ENCODE measurements at regions of chr12 and their contacts with region 1.

Region 1: GRCh38 chr12:54032627-54033100 is at the start of gene HOXC5:
- DNase-seq: peak; percentile 42 to 77 (median 61)
- H3K4me3 ChIP-seq: no peak within 1 kb of the TSS
- H3K4me3 Mint-ChIP-seq: peak within 1 kb of the TSS; percentile 69 to 84 (median 78)
- H3K27ac ChIP-seq: no peak within 1 kb of the TSS
- H3K27ac Mint-ChIP-seq: peak within 1 kb of the TSS in 3 of 8 donors; percentile 33 to 88 (median 78)
- H3K4me1 ChIP-seq: peaks cover 20% of the 10 kb centered on the region
- H3K4me1 Mint-ChIP-seq: peaks cover 22 to 40% (median 26%) of the 10 kb centered on the region in 3 donors
- H3K27me3 ChIP-seq: peaks cover 71% of the 10 kb centered on the region
- H3K27me3 Mint-ChIP-seq: peaks cover 68 to 82% of the 10 kb centered on the region in 2 donors
- total RNA-seq, gene HOXC5: not detected

Region 2: GRCh38 chr12:53968214-53969127 is 64.2 kb before region 1 on chr12:
- CTCF ChIA-PET with region 1: no interaction called
- POLR2A ChIA-PET with region 1: no interaction called
- DNase-seq: no peak
- H3K4me3 ChIP-seq: no peak overlapping the region
- H3K4me3 Mint-ChIP-seq: peak overlapping the region in 1 of 7 donors; percentile 44
- H3K27ac ChIP-seq: no peak overlapping the region
- H3K27ac Mint-ChIP-seq: peak overlapping the region in 3 of 8 donors; percentile 1 to 29 (median 20)
- H3K4me1 ChIP-seq: peaks cover 24% of the 10 kb centered on the region
- H3K4me1 Mint-ChIP-seq: peaks cover 36 to 46% (median 38%) of the 10 kb centered on the region in 3 donors
- H3K27me3 ChIP-seq: peaks cover 98% of the 10 kb centered on the region
- H3K27me3 Mint-ChIP-seq: peaks cover 93 to 100% of the 10 kb centered on the region in 2 donors

Region 3: GRCh38 chr12:53978477-53979356 is 53.9 kb before region 1 on chr12:
- CTCF ChIA-PET with region 1: no interaction called
- POLR2A ChIA-PET with region 1: no interaction called
- DNase-seq: no peak
- H3K4me3 ChIP-seq: no peak overlapping the region
- H3K4me3 Mint-ChIP-seq: peak overlapping the region in 1 of 7 donors; percentile 12
- H3K27ac ChIP-seq: no peak overlapping the region
- H3K27ac Mint-ChIP-seq: peak overlapping the region in 1 of 8 donors; percentile 38
- H3K4me1 ChIP-seq: peaks cover 19% of the 10 kb centered on the region
- H3K4me1 Mint-ChIP-seq: peaks cover 23 to 35% (median 28%) of the 10 kb centered on the region in 3 donors
- H3K27me3 ChIP-seq: peaks cover 92% of the 10 kb centered on the region
- H3K27me3 Mint-ChIP-seq: peaks cover 89 to 95% of the 10 kb centered on the region in 2 donors

Region 4: GRCh38 chr12:54042970-54043853 is 10.5 kb after region 1 on chr12:
- CTCF ChIA-PET with region 1: interaction called, 10 read pairs
- POLR2A ChIA-PET with region 1: no interaction called
- DNase-seq: no peak
- H3K4me3 ChIP-seq: no peak overlapping the region
- H3K4me3 Mint-ChIP-seq: no peak overlapping the region
- H3K27ac ChIP-seq: no peak overlapping the region
- H3K27ac Mint-ChIP-seq: peak overlapping the region in 1 of 8 donors; percentile 70
- H3K4me1 ChIP-seq: peaks cover 13% of the 10 kb centered on the region
- H3K4me1 Mint-ChIP-seq: peaks cover 9 to 26% (median 22%) of the 10 kb centered on the region in 3 donors
- H3K27me3 ChIP-seq: peaks cover 64% of the 10 kb centered on the region
- H3K27me3 Mint-ChIP-seq: peaks cover 87 to 93% of the 10 kb centered on the region in 2 donors

Region 5: DNA sequence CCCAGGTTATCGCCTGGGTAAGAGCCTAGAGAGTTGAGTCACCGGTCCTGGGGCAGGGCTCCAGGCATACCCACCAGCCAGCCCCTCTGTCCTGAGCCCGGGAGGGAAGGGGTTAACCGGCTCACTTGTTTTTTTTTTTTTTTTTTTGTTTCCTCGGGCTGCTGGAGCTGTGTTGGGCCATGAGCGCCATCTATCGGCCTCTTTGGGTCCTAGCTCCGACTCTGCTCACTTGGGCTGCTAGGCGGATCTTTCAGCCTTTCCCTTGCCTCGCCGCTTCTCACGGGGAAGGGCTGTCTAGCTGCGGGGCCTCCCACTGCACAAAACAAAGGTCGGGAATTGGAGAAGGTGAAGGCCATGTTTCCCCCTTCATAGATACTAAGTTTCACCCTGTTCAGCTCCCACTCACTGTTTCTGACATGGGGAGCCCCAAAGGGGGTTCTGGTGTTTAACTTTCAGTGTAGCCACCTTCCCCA is 158.9 kb after region 1 on chr12:
- CTCF ChIA-PET with region 1: interaction called, 73 read pairs
- POLR2A ChIA-PET with region 1: no interaction called
- DNase-seq: peak; percentile 66 to 83 (median 74)
- H3K4me3 ChIP-seq: no peak overlapping the region
- H3K4me3 Mint-ChIP-seq: peak overlapping the region in 1 of 7 donors; percentile 72
- H3K27ac ChIP-seq: no peak overlapping the region
- H3K27ac Mint-ChIP-seq: peak overlapping the region in 2 of 8 donors; percentile 29 to 78
- H3K4me1 ChIP-seq: peaks cover 17% of the 10 kb centered on the region
- H3K4me1 Mint-ChIP-seq: peaks cover 23 to 34% (median 31%) of the 10 kb centered on the region in 3 donors
- H3K27me3 ChIP-seq: peaks cover 20% of the 10 kb centered on the region
- H3K27me3 Mint-ChIP-seq: peaks cover 36 to 50% of the 10 kb centered on the region in 2 donors

Region 6: GRCh38 chr12:54207484-54208294 is 175.0 kb after region 1 on chr12:
- CTCF ChIA-PET with region 1: interaction called, 56 read pairs
- POLR2A ChIA-PET with region 1: no interaction called
- DNase-seq: peak; percentile 56 to 82 (median 66)
- H3K4me3 ChIP-seq: no peak overlapping the region
- H3K4me3 Mint-ChIP-seq: no peak overlapping the region
- H3K27ac ChIP-seq: no peak overlapping the region
- H3K27ac Mint-ChIP-seq: peak overlapping the region in 1 of 8 donors; percentile 39
- H3K4me1 ChIP-seq: no peaks in the 10 kb centered on the region
- H3K4me1 Mint-ChIP-seq: peaks cover 0 to 7% (median 6%) of the 10 kb centered on the region in 3 donors
- H3K27me3 ChIP-seq: no peaks in the 10 kb centered on the region
- H3K27me3 Mint-ChIP-seq: peaks cover 28 to 60% of the 10 kb centered on the region in 2 donors

Measured in CD8-positive, alpha-beta memory T cell (primary cell).